Lower leg skin (tissue), 4 donors: ENCODE measurements at regions of chr10 and their contacts with region 1.

Region 1: DNA sequence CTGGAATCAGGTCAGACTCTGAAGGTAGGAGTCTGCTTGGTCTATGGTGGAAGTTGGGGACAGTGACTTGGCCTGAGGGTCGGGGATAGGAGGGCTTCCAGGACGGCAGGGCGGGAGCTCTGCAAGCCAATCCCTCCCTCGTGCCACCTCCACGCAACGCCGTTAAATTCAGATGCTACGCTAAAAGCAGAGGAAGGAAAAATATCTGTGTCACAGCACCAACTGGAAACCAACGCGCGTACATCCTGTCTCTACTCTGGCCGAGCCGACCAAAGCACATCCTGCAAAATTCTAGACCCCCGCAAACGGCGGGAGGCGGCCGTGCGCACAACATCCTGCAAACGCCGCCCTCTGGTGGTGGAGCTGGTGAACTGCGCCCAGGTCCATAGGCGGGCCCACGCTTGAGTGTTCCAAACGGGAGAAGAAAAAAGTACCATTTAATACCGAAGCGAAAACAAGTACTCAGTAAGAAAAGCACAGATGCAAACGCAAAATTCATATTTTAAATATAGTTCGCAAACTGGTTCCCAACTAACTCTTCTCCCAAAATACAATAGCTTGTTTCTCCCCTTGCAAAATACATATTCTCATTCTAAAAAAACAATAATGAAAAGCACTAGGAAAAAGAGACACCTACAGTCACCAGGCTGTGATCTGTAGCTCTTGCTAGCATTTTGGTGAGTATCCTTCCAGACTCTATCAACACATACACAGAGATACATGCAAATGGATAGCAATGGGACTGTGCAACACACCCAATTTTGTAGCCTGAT is 45.7 kb upstream of the HSPA12A start:
- DNase-seq: peak; percentile 71 to 96
- H3K4me3 ChIP-seq: no peak overlapping the region
- CTCF ChIP-seq: peak in 2 of 3 donors; percentile 33 to 81
- POLR2A ChIP-seq: no peak

Region 2: GRCh38 chr10:116683821-116684220 is 104.3 kb before region 1 on chr10:
- intact Hi-C with region 1: loop called (anchors 2 kb)
- DNase-seq: no peak
- H3K4me3 ChIP-seq: no peak overlapping the region
- CTCF ChIP-seq: no peak
- POLR2A ChIP-seq: no peak

Region 3: DNA sequence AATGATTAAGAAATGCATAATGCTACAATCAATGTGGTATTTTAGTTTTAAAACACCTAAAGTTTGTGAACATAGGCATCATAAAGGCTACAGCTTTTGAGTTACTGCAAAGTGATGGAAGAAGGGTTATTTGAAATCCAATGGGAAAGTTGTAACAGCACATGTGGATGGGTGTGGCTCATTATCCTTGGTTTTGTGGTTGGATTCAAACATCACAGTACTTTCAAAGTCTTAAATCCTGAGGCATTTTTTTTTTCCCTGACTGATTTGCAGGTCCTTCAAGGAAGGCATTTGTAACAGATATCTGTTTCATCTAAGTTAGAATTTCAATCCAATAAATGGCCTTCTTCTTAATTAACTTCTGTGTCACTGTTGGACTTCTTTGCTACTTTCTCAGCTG is 226.8 kb after region 1 on chr10:
- intact Hi-C with region 1: no loop called
- DNase-seq: no peak
- H3K4me3 ChIP-seq: no peak overlapping the region
- CTCF ChIP-seq: no peak
- POLR2A ChIP-seq: no peak